ENCODE measurements at regions of chr11 and their contacts with region 1.

Region 1: GRCh38 chr11:126989942-126990715 is 10.4 kb downstream of the KIRREL3 start:
- DNase-seq: peak; percentile 70 to 79 (median 73)
- ATAC-seq: peak; percentile 79
- H3K4me3 ChIP-seq: no peak overlapping the region
- H3K27ac ChIP-seq: no peak overlapping the region
- H3K4me1 ChIP-seq: no peaks in the 10 kb centered on the region
- H3K27me3 ChIP-seq: no peaks in the 10 kb centered on the region
- CTCF ChIP-seq: peak; percentile 87 to 97 (median 91)
- POLR2A ChIP-seq: no peak

Region 2: DNA sequence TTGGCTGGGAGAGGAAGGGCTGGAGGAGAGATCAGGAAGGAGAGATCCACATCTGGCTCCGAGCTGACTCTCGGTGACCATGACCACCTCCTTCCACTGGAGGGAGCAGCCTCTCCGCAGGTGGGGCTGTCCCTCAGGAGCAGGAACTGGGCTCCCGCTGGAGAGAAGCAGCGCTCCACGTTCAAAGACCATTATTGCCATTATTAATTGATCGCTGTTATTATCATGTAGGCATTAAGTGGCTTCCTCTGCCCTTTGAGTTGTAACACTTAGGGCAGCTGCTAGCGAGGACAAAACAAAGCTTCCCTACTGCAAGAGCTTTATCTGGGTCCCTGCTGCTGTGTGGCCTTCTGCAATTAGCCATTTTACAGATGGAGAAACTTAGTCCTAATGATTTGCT is 382.8 kb before region 1 on chr11:
- intact Hi-C with region 1: loop called (anchors 5 kb)
- DNase-seq: peak; percentile 70 to 72 (median 70)
- ATAC-seq: peak; percentile 95
- H3K4me3 ChIP-seq: no peak overlapping the region
- H3K27ac ChIP-seq: no peak overlapping the region
- H3K4me1 ChIP-seq: peaks cover 7% of the 10 kb centered on the region
- H3K27me3 ChIP-seq: peaks cover 0 to 4% of the 10 kb centered on the region in 2 donors
- CTCF ChIP-seq: peak; percentile 69 to 90 (median 81)
- POLR2A ChIP-seq: no peak

Region 3: DNA sequence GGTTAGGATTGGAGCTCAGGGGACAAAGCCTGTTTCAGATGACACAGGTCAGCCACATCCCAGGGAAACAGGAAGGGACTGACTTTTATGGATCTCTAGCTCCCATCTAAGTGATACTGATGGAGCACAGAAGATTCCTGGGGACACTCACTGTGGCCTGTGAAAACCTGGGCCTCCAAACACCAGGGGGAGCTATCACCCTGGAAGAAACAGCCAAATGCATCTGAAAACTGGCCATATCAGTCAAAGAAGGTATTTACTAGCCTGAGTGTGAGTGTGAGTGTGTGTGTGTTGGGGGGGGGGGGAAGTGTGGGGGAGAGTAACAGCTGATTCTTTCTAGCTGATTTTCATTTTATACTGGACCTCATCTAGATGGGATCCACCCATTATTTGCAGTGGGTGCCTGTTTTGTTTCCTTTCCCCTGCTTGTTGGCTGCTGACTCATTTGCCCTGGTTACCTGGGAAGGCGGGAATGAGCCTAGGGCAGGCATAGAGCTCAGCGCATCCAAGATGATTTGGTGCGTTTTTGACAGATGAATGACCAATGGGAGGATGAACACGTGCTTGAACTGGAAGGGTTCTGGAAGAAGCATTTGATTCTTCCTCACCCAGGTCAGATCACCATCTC is 273.6 kb before region 1 on chr11:
- intact Hi-C with region 1: loop called (anchors 5 kb)
- DNase-seq: peak; percentile 52 to 72 (median 62)
- ATAC-seq: no peak
- H3K4me3 ChIP-seq: no peak overlapping the region
- H3K27ac ChIP-seq: no peak overlapping the region
- H3K4me1 ChIP-seq: no peaks in the 10 kb centered on the region
- H3K27me3 ChIP-seq: no peaks in the 10 kb centered on the region
- CTCF ChIP-seq: peak; percentile 55 to 74 (median 63)
- POLR2A ChIP-seq: no peak

Region 4: GRCh38 chr11:127080735-127081134 is 90.6 kb after region 1 on chr11:
- intact Hi-C with region 1: no loop called
- DNase-seq: no peak
- ATAC-seq: no peak
- H3K4me3 ChIP-seq: no peak overlapping the region
- H3K27ac ChIP-seq: no peak overlapping the region
- H3K4me1 ChIP-seq: no peaks in the 10 kb centered on the region
- H3K27me3 ChIP-seq: no peaks in the 10 kb centered on the region
- CTCF ChIP-seq: no peak
- POLR2A ChIP-seq: no peak